ENCODE measurements at regions of chr14 and their contacts with region 1.

Region 1: DNA sequence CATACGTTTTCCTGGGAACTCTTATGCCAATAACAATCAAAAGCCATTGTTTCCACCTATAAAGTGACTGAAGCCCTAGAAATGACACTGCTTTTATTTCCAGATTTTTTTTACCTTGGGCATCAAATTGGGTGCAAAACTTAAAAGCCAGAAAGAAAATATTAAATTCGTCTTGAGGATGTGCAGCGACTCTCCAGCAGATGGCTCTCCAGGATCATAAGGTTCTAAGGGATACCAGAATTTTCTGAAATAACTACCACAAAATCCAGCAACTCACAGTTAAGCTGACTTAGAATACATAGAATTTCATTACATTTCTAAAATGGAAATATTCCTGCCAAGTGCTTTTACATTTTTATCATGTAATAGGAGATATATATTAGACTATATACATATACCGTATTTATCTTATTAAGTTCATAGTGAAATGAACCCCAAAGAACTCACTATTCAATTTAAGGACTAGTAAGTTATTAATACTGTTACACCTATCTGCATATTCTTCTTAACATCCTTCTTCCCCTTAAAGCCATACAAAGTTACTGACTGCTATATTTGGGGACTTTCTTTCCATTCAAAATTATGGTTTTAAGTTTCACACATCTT is 44.0 kb downstream of the ARMH4 start:
- DNase-seq: no peak
- H3K4me3 ChIP-seq: no peak overlapping the region
- H3K27ac ChIP-seq: no peak overlapping the region
- H3K4me1 ChIP-seq: no peaks in the 10 kb centered on the region
- H3K27me3 ChIP-seq: no peaks in the 10 kb centered on the region
- CTCF ChIP-seq: peak; percentile 25 to 65 (median 61)
- POLR2A ChIP-seq: no peak

Region 2: GRCh38 chr14:57982804-57983634 is 125.0 kb before region 1 on chr14:
- intact Hi-C with region 1: no loop called
- DNase-seq: no peak
- H3K4me3 ChIP-seq: no peak overlapping the region
- H3K27ac ChIP-seq: no peak overlapping the region
- H3K4me1 ChIP-seq: peaks cover 4% of the 10 kb centered on the region
- H3K27me3 ChIP-seq: no peaks in the 10 kb centered on the region
- CTCF ChIP-seq: no peak
- POLR2A ChIP-seq: no peak

Region 3: DNA sequence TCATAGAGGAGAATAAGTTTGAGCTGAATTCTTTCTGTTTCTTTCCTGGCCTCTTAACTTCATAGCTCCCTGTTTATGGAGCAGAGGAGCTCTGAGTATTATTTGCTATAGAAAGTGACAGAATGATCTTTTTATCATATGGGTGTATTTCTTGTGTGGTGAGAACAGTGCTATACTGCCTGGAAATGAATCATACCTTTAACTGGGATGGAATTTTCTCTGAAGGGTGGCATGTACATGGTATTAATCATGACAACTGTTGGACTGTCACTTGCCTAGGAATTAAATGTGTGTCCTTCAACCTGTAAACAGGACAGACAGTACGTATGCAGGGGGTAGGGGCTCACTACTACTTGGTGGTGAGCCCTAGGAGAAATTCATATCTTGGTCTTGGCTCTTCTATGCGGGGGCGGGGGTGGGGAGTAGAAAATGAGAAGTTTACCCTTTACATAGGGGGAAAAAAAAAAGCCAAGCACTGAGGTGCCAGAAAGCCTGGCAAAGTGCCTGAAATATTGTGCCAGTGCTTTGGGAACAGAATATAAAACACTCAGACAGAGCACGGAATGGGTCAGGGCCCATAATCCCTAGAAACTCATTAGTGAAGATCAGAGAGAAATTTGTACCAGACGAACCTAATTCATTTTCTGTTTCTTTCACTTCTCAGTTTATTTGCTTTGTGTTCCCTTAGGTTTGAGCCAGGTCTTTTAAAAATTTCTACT is 10.2 kb after region 1 on chr14:
- intact Hi-C with region 1: no loop called
- DNase-seq: no peak
- H3K4me3 ChIP-seq: no peak overlapping the region
- H3K27ac ChIP-seq: no peak overlapping the region
- H3K4me1 ChIP-seq: no peaks in the 10 kb centered on the region
- H3K27me3 ChIP-seq: no peaks in the 10 kb centered on the region
- CTCF ChIP-seq: no peak
- POLR2A ChIP-seq: no peak

Region 4: DNA sequence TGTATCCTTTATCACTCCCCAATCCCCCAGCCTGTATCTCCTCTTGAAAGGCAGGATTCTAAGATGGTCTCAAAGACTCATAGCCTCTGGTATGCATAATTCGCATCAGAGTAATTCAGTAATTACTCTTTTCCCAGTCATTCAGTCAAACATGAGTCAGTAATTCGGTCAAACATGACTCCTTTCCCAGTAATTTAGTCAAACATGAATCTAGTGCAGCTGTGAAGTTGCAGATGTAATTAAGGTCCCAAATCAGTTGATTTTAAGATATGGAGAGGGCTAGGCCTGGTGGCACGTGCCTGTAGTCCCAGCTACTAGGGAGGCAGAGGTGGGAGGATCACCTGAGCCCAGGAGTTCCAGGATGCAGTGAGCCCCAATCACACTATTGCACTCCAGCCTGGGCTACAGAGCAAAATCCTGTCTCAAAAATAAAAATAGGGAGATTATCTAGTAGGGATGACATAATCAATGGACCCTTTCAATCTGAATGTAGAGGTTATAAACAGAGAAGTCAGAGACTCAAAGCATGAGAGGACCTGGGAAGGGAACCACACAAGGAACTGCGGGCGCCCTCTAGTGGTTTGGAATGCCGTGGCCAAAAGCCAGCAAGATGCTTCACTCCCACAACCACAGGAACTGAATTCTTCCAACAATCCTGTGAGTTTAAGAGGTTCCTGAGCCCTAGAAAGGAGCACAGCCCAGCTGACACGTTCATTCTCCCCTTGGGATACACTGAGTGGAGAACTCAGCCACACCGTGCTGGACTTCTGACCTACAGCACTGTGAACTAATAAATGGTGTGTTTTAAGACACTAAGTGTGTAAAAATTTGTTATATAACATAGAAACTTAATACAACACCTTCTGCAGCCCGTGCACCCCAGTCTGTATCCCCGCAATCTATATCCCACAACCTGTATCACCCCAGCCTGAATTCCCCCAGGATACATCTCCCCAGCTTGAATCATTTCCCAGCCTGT is 58.2 kb after region 1 on chr14:
- intact Hi-C with region 1: loop called (anchors 2 kb)
- DNase-seq: no peak
- H3K4me3 ChIP-seq: no peak overlapping the region
- H3K27ac ChIP-seq: no peak overlapping the region
- H3K4me1 ChIP-seq: no peaks in the 10 kb centered on the region
- H3K27me3 ChIP-seq: no peaks in the 10 kb centered on the region
- CTCF ChIP-seq: peak; percentile 29 to 66 (median 63)
- POLR2A ChIP-seq: no peak